OCI-LY7 (cell line): ENCODE measurements at regions of chr6 and their contacts with region 1.

Region 1: GRCh38 chr6:26312501-26313390 is 52.3 kb upstream of the BTN3A2 start:
- DNase-seq: peak; percentile 80
- H3K4me3 ChIP-seq: peak overlapping the region; percentile 71
- H3K27ac ChIP-seq: peak overlapping the region; percentile 43
- H3K4me1 ChIP-seq: peaks cover 28% of the 10 kb centered on the region
- CTCF ChIP-seq: no peak

Region 2: GRCh38 chr6:26327450-26328264 is 14.9 kb after region 1 on chr6:
- CTCF ChIA-PET with region 1: no interaction called
- POLR2A ChIA-PET with region 1: interaction called, 5 read pairs
- intact Hi-C with region 1: loop called (anchors 1 kb)
- DNase-seq: peak; percentile 68
- H3K4me3 ChIP-seq: peak overlapping the region; percentile 66
- H3K27ac ChIP-seq: no peak overlapping the region
- H3K4me1 ChIP-seq: peaks cover 44% of the 10 kb centered on the region
- CTCF ChIP-seq: no peak